Prostate gland (tissue), 2 donors: ENCODE measurements at regions of chr12 and their contacts with region 1.

Region 1: GRCh38 chr12:101823891-101824290 is 6.9 kb downstream of the GNPTAB start:
- DNase-seq: peak; percentile 57
- H3K4me3 ChIP-seq: no peak overlapping the region
- H3K27ac ChIP-seq: peak overlapping the region in 1 of 2 donors; percentile 5
- H3K4me1 ChIP-seq: no peaks in the 10 kb centered on the region
- H3K27me3 ChIP-seq: no peaks in the 10 kb centered on the region
- CTCF ChIP-seq: peak in 3 of 4 experiments; percentile 9 to 37 (median 18)
- POLR2A ChIP-seq: no peak

Region 2: GRCh38 chr12:101490286-101490920 is 333.5 kb before region 1 on chr12:
- intact Hi-C with region 1: loop called (anchors 10 kb)
- DNase-seq: peak; percentile 36
- H3K4me3 ChIP-seq: no peak overlapping the region
- H3K27ac ChIP-seq: no peak overlapping the region
- H3K4me1 ChIP-seq: no peaks in the 10 kb centered on the region
- H3K27me3 ChIP-seq: no peaks in the 10 kb centered on the region
- CTCF ChIP-seq: peak; percentile 11 to 61 (median 44)
- POLR2A ChIP-seq: no peak

Region 3: DNA sequence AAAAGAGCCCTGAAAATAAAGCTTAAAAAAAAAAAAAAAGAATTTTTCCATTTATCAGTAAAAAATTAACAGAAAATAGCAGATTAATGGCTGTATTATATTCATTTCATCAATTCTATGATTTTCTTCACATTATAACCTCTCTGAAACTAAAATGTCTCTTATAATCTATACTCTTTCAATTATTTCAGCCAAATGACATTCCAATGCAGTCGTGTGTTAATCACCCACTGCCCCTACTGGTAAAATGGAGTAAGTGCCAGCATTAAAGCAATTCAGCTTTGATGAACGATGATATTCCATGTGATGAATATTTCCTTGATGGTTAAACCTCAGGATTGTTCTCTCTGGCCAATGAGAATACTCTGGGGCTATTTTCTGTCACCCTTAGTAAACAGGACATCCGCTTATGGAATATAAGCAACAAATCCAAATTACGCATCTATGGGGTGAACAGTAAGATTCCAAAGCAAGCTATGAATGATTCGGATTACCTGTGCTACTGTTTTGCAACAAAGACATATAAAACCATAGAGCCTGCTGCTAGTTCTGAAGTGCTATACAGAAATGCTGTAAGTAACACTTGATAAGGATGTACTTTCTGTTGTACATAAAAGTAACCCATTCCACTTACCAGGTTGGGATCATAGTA is 64.4 kb before region 1 on chr12:
- intact Hi-C with region 1: no loop called
- DNase-seq: no peak
- H3K4me3 ChIP-seq: no peak overlapping the region
- H3K27ac ChIP-seq: no peak overlapping the region
- H3K4me1 ChIP-seq: no peaks in the 10 kb centered on the region
- H3K27me3 ChIP-seq: no peaks in the 10 kb centered on the region
- CTCF ChIP-seq: peak; percentile 13 to 76 (median 60)
- POLR2A ChIP-seq: no peak

Region 4: GRCh38 chr12:101782273-101782731 is 41.6 kb before region 1 on chr12:
- intact Hi-C with region 1: loop called (anchors 5 kb)
- DNase-seq: no peak
- H3K4me3 ChIP-seq: no peak overlapping the region
- H3K27ac ChIP-seq: no peak overlapping the region
- H3K4me1 ChIP-seq: peaks cover 11% of the 10 kb centered on the region
- H3K27me3 ChIP-seq: no peaks in the 10 kb centered on the region
- CTCF ChIP-seq: no peak
- POLR2A ChIP-seq: no peak

Region 5: DNA sequence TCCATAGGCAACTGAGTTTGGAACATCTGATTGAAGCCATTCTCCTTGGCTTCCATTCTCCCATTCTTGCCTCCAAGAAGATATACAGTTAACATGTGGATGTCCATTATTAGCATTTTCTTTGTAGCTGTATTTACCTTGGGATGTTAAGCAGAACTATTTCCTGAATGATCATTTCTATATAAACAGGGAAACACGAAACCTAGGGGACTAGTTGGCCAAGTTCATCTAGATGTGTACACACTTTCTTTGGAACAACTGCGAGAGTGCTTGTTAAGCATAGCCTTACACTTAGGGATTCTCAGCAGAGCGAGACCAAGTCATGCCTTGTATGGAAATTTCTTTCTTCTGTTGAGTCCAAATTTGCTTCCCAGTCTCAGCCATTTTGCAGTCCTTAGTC is 95.6 kb after region 1 on chr12:
- intact Hi-C with region 1: no loop called
- DNase-seq: no peak
- H3K4me3 ChIP-seq: no peak overlapping the region
- H3K27ac ChIP-seq: no peak overlapping the region
- H3K4me1 ChIP-seq: no peaks in the 10 kb centered on the region
- H3K27me3 ChIP-seq: no peaks in the 10 kb centered on the region
- CTCF ChIP-seq: no peak
- POLR2A ChIP-seq: no peak

Region 6: DNA sequence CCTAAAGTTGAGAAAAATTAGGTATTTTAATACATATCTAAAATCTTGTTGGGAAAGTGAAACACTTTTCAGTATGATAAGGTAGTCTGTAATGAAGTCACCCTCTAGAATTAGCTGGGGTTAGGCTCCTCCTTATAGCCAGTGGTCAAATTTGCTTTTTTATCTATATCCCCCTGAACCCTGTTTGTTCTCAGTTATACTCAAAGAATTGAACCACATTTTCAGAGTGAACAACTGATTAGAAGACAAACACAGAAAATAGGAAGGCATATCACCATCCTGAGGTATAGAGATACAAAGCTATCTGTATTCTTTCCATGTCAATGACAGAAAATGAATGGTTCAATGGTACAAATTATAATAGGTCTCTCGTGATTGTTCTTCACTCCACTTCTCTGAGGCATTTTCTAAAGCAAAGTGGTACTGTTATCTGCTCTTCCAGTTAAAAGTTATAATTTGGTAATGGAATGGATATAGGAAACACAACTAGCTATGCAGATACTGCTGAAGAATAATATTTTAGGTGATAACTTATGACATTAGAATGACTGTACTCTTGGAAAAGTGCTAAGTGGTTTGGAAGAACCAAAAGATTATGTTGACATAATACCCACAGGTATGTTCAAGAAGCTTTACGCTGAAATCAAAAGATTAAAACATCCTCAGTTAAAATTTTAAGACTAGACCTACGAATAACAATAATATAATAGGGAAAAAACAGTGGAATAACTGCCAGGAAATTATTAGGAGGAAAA is 210.3 kb after region 1 on chr12:
- intact Hi-C with region 1: no loop called
- DNase-seq: no peak
- H3K4me3 ChIP-seq: no peak overlapping the region
- H3K27ac ChIP-seq: no peak overlapping the region
- H3K4me1 ChIP-seq: no peaks in the 10 kb centered on the region
- H3K27me3 ChIP-seq: no peaks in the 10 kb centered on the region
- CTCF ChIP-seq: no peak
- POLR2A ChIP-seq: no peak